ENCODE measurements at regions of chr16 and their contacts with region 1.

Region 1: DNA sequence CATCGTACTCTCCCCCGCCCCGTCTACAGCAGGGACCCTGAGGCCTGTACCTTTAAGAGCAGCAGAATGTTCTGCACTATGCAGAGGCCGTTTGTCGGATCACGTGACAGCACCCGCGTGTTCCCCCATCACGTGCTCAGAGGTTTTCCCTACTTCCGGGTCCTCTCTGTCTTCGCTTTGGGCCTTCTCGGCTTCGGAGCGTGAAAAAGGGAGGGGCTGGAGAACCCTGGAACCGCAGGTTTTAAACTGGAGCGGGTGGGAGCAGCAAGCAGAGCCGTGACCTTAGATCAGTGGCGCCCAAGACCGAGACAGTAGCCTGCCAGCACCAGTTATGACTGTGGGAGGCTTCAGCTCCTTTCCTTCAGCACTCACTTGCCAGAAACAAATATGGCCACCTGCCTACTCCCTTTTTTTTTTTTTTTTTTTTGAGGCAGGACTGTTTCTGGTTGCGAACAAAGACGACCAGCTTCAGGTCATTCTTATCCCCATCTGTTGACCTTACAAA is at the start of gene CLN3:
- DNase-seq: peak; percentile 94 to 97
- H3K4me3 ChIP-seq: peak within 1 kb of the TSS; percentile 72 to 83
- H3K27ac ChIP-seq: peak within 1 kb of the TSS; percentile 78 to 80
- H3K4me1 ChIP-seq: peaks cover 0 to 16% (median 8%) of the 10 kb centered on the region in 4 donors
- H3K27me3 ChIP-seq: peaks cover 0 to 2% of the 10 kb centered on the region in 2 donors
- CTCF ChIP-seq: no peak

Region 2: GRCh38 chr16:28211712-28212534 is 280.1 kb before region 1 on chr16 and contains the start of gene XPO6:
- intact Hi-C with region 1: loop called (anchors 10 kb)
- DNase-seq: peak; percentile 92 to 97
- H3K4me3 ChIP-seq: peak within 1 kb of the TSS; percentile 68 to 78
- H3K27ac ChIP-seq: peak within 1 kb of the TSS; percentile 86 to 92
- H3K4me1 ChIP-seq: peaks cover 0 to 25% (median 11%) of the 10 kb centered on the region in 4 donors
- H3K27me3 ChIP-seq: no peaks in the 10 kb centered on the region
- CTCF ChIP-seq: no peak

Region 3: GRCh38 chr16:28291873-28292660 is 200.0 kb before region 1 on chr16 and contains the start of gene SBK1:
- intact Hi-C with region 1: no loop called
- DNase-seq: peak; percentile 63 to 69
- H3K4me3 ChIP-seq: peak within 1 kb of the TSS; percentile 49 to 62
- H3K27ac ChIP-seq: no peak within 1 kb of the TSS
- H3K4me1 ChIP-seq: peaks cover 6 to 16% (median 14%) of the 10 kb centered on the region in 4 donors
- H3K27me3 ChIP-seq: peaks cover 0 to 29% of the 10 kb centered on the region in 2 donors
- CTCF ChIP-seq: no peak

Region 4: GRCh38 chr16:28538733-28539596 is 46.9 kb after region 1 on chr16 and contains the start of gene NUPR1:
- intact Hi-C with region 1: loop called (anchors 2 kb)
- DNase-seq: peak; percentile 98 to 99
- H3K4me3 ChIP-seq: peak within 1 kb of the TSS; percentile 59 to 64
- H3K27ac ChIP-seq: peak within 1 kb of the TSS; percentile 96
- H3K4me1 ChIP-seq: peaks cover 0 to 54% (median 24%) of the 10 kb centered on the region in 4 donors
- H3K27me3 ChIP-seq: no peaks in the 10 kb centered on the region
- CTCF ChIP-seq: no peak

Region 5: DNA sequence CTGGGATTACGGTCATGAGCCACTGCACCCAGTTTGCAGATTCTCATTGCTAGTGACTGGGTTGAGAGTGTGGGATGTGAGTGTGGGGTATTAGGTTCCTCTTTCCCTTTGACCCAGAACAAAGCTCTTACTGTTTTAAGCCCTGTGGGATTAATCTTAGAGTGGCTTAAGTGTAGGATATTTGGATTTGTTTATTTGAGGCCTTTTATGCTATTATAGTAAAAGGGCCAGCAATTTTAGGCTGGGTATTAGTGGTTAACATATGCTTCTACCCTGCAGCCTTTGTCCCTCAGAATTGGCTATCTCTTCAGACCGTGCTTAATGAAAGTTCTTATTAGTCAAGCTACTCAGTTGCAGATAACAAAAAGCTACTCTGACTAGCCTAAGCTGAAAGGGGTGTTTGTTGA is 64.9 kb after region 1 on chr16:
- intact Hi-C with region 1: no loop called
- DNase-seq: no peak
- H3K4me3 ChIP-seq: no peak overlapping the region
- H3K27ac ChIP-seq: no peak overlapping the region
- H3K4me1 ChIP-seq: peaks cover 0 to 20% (median 14%) of the 10 kb centered on the region in 4 donors
- H3K27me3 ChIP-seq: no peaks in the 10 kb centered on the region
- CTCF ChIP-seq: no peak

Measured in tibial artery (tissue), 4 donors.